Naive thymus-derived CD4-positive, alpha-beta T cell (primary cell): ENCODE measurements at regions of chrX and their contacts with region 1.

Region 1: DNA sequence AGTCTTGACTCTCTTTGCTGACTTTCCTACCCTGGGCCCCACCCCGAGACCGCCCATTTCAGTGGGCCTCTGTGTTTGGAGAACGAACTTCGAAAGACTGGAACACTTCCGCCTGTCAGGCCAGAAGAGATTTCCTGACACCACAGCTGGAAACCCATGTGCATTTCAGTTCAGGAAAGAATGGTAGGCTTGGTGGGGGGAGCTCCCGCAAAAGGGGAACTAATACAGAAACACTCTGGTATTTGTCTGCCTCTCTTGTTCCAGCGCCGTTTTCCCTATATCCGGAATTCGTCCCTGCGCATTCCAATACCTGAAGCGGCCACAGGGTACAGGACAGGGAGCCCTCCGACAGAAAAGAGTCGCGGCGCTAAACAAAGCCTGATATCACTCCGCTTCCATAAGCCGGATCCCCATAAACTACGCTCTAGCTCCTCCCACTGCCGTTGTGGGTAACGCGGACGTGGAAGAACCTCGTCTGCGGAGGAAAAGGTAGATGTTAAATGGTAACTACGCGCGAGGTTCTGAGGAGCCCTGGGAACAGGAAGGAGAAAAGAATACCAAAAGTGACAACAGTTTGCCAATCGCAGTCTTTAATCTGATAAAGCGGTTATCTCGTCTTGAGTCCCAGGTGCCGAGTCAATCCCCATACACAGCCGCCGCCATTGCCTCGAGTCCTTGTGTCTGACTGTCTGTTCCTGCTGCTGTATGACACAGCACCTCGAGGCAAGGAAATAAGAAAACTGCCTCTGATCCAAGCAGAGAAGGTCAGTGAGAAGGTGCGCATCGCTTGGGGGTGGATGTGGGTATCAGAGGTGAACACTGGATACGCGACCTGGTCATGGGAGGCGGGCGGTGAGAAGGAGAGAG is at the start of gene ARMCX5:
- DNase-seq: peak; percentile 26 to 82 (median 74)
- ATAC-seq: peak; percentile 93
- H3K4me3 ChIP-seq: peak within 1 kb of the TSS; percentile 98
- H3K4me3 Mint-ChIP-seq: peak within 1 kb of the TSS; percentile 83 to 99 (median 96)
- H3K27ac ChIP-seq: peak within 1 kb of the TSS; percentile 79
- H3K27ac Mint-ChIP-seq: peak within 1 kb of the TSS; percentile 92 to 99 (median 97)
- H3K4me1 ChIP-seq: peaks cover 2 to 3% of the 10 kb centered on the region in 2 donors
- H3K4me1 Mint-ChIP-seq: peaks cover 0 to 53% (median 39%) of the 10 kb centered on the region in 7 donors
- H3K27me3 ChIP-seq: no peaks in the 10 kb centered on the region
- H3K27me3 Mint-ChIP-seq: no peaks in the 10 kb centered on the region
- total RNA-seq, gene ARMCX5: 8.2 to 13.1 (median 12.3) TPM

Region 2: GRCh38 chrX:100829730-100830129 is 1769.6 kb before region 1 on chrX:
- CTCF ChIA-PET with region 1: no interaction called
- POLR2A ChIA-PET with region 1: no interaction called
- intact Hi-C with region 1: loop called in 1 of 2 experiments (anchors 5 kb)
- DNase-seq: peak in 4 of 9 donors; percentile 9 to 19 (median 13)
- ATAC-seq: peak; percentile 80
- H3K4me3 ChIP-seq: no peak overlapping the region
- H3K4me3 Mint-ChIP-seq: peak overlapping the region in 9 of 10 donors; percentile 23 to 81 (median 48)
- H3K27ac ChIP-seq: peak overlapping the region; percentile 46
- H3K27ac Mint-ChIP-seq: peak overlapping the region in 8 of 9 donors; percentile 62 to 99 (median 84)
- H3K4me1 ChIP-seq: no peaks in the 10 kb centered on the region
- H3K4me1 Mint-ChIP-seq: peaks cover 8 to 30% (median 13%) of the 10 kb centered on the region in 7 donors
- H3K27me3 ChIP-seq: no peaks in the 10 kb centered on the region
- H3K27me3 Mint-ChIP-seq: no peaks in the 10 kb centered on the region

Region 3: DNA sequence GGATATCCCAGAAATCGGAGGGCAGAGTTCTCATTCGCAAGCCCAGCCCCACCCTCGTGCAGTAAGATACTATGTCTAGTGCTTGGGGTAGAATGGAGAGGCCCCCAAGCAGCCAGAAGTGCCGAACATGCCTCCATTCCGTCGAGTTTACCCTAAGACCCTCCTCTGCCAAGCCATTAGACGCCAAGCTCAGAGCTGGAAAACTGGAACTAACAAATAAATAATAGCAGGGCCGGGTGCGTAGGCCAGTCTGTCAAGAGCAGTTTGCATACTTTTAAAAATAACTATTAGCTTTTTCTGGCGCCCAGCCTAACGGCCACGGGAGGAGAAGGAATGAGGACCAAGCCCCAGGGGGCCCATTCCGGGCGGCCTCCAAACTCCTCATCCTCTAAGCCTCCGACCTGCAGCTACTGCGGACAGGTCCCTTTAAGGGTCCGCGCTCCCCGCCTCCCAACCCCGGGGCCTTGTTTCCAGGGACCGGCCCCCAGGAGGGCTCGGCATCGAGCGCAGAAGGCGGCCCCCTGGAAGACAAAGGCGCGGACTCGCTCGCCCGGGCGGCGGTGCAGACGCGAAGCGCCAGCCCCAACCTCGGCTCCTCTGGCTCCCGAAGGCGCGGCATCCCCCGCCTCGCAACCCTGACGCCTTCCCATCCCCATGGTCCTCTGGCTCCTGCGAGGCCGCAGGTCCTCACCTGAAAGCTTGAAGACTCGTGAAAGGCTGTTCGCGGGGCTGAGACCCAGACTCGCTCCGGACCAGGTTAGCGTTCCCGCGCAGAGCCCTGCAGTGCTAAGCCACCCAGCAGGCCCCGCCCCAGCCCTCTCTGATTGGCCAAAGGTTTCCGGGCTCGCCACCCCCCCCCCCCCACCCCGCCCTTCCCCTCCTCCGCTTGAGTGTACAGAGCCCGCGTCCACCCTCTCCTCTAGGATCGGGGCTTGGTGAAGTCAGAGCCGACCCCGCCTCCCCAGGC is 83.1 kb before region 1 on chrX and contains the start of gene TMSB15A:
- CTCF ChIA-PET with region 1: no interaction called
- POLR2A ChIA-PET with region 1: no interaction called
- intact Hi-C with region 1: loop called in 1 of 2 experiments (anchors 5 kb)
- DNase-seq: peak; percentile 8 to 57 (median 42)
- ATAC-seq: peak; percentile 90
- H3K4me3 ChIP-seq: peak within 1 kb of the TSS; percentile 43
- H3K4me3 Mint-ChIP-seq: peak within 1 kb of the TSS; percentile 69 to 87 (median 84)
- H3K27ac ChIP-seq: no peak within 1 kb of the TSS
- H3K27ac Mint-ChIP-seq: no peak within 1 kb of the TSS
- H3K4me1 ChIP-seq: no peaks in the 10 kb centered on the region
- H3K4me1 Mint-ChIP-seq: peaks cover 0 to 11% (median 0%) of the 10 kb centered on the region in 7 donors
- H3K27me3 ChIP-seq: no peaks in the 10 kb centered on the region
- H3K27me3 Mint-ChIP-seq: peaks cover 30 to 48% (median 39%) of the 10 kb centered on the region in 5 donors
- total RNA-seq, gene TMSB15A: 0.46 TPM in 1 of 5 experiments, not detected in the others

Region 4: GRCh38 chrX:102643275-102643674 is 44.0 kb after region 1 on chrX:
- CTCF ChIA-PET with region 1: no interaction called
- POLR2A ChIA-PET with region 1: no interaction called
- intact Hi-C with region 1: no loop called
- DNase-seq: no peak
- ATAC-seq: no peak
- H3K4me3 ChIP-seq: no peak overlapping the region
- H3K4me3 Mint-ChIP-seq: no peak overlapping the region
- H3K27ac ChIP-seq: no peak overlapping the region
- H3K27ac Mint-ChIP-seq: no peak overlapping the region
- H3K4me1 ChIP-seq: no peaks in the 10 kb centered on the region
- H3K4me1 Mint-ChIP-seq: peaks cover 0 to 5% (median 0%) of the 10 kb centered on the region in 7 donors
- H3K27me3 ChIP-seq: no peaks in the 10 kb centered on the region
- H3K27me3 Mint-ChIP-seq: no peaks in the 10 kb centered on the region

Region 5: DNA sequence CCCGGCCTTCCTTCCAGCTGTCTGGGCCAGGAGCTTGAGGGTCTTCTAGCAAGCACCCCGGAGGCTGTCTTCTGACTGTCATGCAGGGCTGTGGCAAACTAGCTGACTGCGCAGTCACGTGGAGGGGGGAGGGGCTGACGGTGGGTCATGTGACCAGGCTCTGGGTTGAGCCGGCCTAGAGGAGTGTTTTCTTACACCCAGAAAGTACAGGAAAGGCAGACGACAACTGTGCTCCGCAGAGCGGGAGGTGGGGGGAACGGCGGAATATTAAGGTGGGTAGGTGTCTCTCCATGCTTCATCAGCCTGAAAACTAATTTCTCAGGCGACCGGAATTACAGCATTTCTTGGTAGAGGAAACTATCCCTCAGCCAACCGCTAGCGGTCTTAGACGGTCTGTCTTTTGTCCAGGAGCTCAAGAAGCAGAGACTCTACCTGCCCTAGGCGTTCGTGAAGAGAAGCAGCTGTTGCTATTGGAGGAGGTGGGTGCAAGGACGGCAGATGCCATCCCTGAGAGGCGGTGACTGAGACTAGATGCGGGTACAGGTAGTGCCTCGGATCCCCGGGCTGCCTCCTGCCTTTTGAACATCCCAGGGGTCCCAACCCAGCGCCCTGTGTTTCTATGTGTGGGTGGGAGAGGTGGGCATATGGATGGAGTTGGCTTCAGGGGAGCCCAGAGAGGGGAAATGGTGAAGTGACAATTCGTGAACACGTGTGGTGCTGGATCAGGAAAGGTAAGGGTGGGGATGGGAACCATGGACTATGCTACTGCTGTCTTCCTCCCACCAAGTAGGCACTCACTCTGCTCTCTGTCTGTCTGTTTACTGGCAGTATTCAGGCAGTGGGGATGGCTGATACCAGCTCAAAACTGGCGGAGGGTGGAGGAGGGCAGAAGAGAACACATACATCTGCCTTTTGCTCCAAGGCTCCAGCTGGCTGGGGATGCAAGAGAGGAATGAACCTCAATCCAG is 60.8 kb after region 1 on chrX:
- CTCF ChIA-PET with region 1: no interaction called
- POLR2A ChIA-PET with region 1: no interaction called
- intact Hi-C with region 1: loop called in 1 of 2 experiments (anchors 2 kb)
- DNase-seq: peak; percentile 57 to 82 (median 78)
- ATAC-seq: peak; percentile 97
- H3K4me3 ChIP-seq: peak overlapping the region; percentile 58
- H3K4me3 Mint-ChIP-seq: peak overlapping the region; percentile 85 to 94 (median 91)
- H3K27ac ChIP-seq: peak overlapping the region; percentile 73
- H3K27ac Mint-ChIP-seq: peak overlapping the region; percentile 84 to 96 (median 89)
- H3K4me1 ChIP-seq: no peaks in the 10 kb centered on the region
- H3K4me1 Mint-ChIP-seq: peaks cover 17 to 46% (median 39%) of the 10 kb centered on the region in 7 donors
- H3K27me3 ChIP-seq: no peaks in the 10 kb centered on the region
- H3K27me3 Mint-ChIP-seq: peaks cover 0 to 7% (median 0%) of the 10 kb centered on the region in 5 donors

Region 6: DNA sequence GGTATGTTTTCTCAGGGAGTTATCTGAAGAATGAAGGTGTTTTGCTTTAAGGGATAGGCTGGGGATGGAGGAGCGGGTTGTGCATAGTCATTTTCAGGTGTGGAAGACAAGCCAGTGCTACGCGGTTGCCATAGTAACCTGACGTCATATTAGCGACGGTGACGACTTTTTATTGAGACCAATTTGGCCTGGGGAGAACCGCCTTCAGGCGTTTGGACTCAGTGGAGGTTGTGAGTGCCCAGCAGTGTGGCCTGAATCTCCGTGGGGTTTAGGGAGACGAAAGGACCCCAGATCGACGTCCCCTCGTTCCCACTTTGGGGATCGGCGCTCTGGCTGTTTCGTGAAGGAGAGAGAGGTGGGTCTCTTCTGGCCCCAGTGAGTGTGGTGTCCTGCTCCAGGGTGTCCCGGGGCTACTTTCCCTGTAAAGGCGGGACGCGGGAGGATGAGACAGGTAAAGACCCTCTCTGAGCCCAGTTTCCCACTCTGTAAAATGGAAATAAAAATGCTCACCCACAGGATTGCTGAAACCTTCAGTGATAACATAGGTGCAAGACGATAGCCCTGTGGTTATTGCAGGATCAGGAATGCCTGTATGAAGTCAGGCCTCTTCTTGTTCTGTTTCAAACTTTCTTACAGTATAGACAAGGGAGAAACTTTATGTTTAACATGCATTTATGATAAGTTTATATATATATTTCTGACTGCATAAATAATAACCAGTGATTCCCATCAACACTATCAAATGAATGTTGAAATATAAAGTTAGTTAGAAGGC is 169.9 kb after region 1 on chrX:
- CTCF ChIA-PET with region 1: no interaction called
- POLR2A ChIA-PET with region 1: no interaction called
- intact Hi-C with region 1: loop called (anchors 1 kb)
- DNase-seq: peak; percentile 41 to 81 (median 72)
- ATAC-seq: peak; percentile 90
- H3K4me3 ChIP-seq: peak overlapping the region; percentile 79
- H3K4me3 Mint-ChIP-seq: peak overlapping the region; percentile 83 to 98 (median 96)
- H3K27ac ChIP-seq: peak overlapping the region; percentile 78
- H3K27ac Mint-ChIP-seq: peak overlapping the region; percentile 72 to 99 (median 97)
- H3K4me1 ChIP-seq: no peaks in the 10 kb centered on the region
- H3K4me1 Mint-ChIP-seq: peaks cover 0 to 19% (median 11%) of the 10 kb centered on the region in 7 donors
- H3K27me3 ChIP-seq: no peaks in the 10 kb centered on the region
- H3K27me3 Mint-ChIP-seq: no peaks in the 10 kb centered on the region

Region 7: GRCh38 chrX:102863735-102864134 is 264.4 kb after region 1 on chrX:
- CTCF ChIA-PET with region 1: no interaction called
- POLR2A ChIA-PET with region 1: no interaction called
- intact Hi-C with region 1: loop called in 1 of 2 experiments (anchors 5 kb)
- DNase-seq: peak; percentile 57 to 82 (median 70)
- ATAC-seq: peak; percentile 99
- H3K4me3 ChIP-seq: no peak overlapping the region
- H3K4me3 Mint-ChIP-seq: no peak overlapping the region
- H3K27ac ChIP-seq: no peak overlapping the region
- H3K27ac Mint-ChIP-seq: no peak overlapping the region
- H3K4me1 ChIP-seq: no peaks in the 10 kb centered on the region
- H3K4me1 Mint-ChIP-seq: no peaks in the 10 kb centered on the region
- H3K27me3 ChIP-seq: no peaks in the 10 kb centered on the region
- H3K27me3 Mint-ChIP-seq: no peaks in the 10 kb centered on the region